Activated T-helper 1 cell treated with anti-CD3 and anti-CD28 coated beads, Interleukin-12 subunit alpha, Interleukin-12 subunit beta, Interleukin-2, Interleukin-4 antibody, amounts not matched to agents 30 ng/mL and 10 ng/mL and 1 ng/mL, durations not matched to agents 14 hours and 24 hours and 36 hours (primary cell): ENCODE measurements at regions of chr2 and their contacts with region 1.

Region 1: DNA sequence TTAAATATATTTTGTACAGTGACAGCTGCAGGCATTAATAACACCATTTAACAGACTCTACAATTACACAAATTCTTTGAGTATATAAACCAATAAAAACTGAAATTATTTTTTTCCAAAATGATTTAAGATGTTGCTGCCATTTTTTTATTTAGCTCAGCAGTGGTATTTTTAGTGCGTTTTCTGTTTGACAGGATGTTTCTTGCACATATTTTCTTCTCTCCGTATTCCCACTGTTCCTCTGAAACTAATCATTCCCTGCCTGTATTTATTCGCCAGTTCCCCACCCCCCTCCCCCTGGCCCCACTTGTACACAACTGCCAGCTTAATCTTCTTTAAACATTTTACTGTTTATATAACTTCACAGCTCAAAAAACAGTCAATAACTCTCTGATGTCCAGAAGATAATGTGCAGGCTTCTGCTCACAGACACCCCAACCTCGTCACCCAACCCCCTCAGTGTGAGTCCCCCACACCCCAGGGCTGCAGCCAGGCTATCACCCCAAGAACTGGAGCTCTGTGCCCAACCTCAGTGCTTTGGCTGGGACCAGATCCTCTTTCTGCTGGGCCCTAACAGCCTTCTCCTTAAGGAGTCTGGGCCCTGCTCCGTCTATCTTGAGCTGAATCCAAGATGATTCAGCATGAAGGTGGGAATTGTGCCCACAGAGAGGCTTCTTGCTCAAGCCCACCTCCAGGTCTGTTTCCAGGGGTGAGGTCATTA is 41.6 kb upstream of the MAP4K4 start:
- DNase-seq: no peak
- H3K4me3 Mint-ChIP-seq: no peak overlapping the region
- H3K27ac Mint-ChIP-seq: no peak overlapping the region
- H3K4me1 Mint-ChIP-seq: peaks cover 18% of the 10 kb centered on the region
- H3K27me3 Mint-ChIP-seq: no peaks in the 10 kb centered on the region

Region 2: GRCh38 chr2:101623031-101623521 is 32.8 kb before region 1 on chr2:
- intact Hi-C with region 1: loop called (anchors 1 kb)
- DNase-seq: no peak
- H3K4me3 Mint-ChIP-seq: peak overlapping the region; percentile 2
- H3K27ac Mint-ChIP-seq: peak overlapping the region; percentile 20
- H3K4me1 Mint-ChIP-seq: peaks cover 34% of the 10 kb centered on the region
- H3K27me3 Mint-ChIP-seq: no peaks in the 10 kb centered on the region

Region 3: GRCh38 chr2:101675512-101675911 is 19.6 kb after region 1 on chr2:
- intact Hi-C with region 1: loop called (anchors 2 kb)
- DNase-seq: no peak
- H3K4me3 Mint-ChIP-seq: no peak overlapping the region
- H3K27ac Mint-ChIP-seq: no peak overlapping the region
- H3K4me1 Mint-ChIP-seq: peaks cover 19% of the 10 kb centered on the region
- H3K27me3 Mint-ChIP-seq: no peaks in the 10 kb centered on the region

Region 4: DNA sequence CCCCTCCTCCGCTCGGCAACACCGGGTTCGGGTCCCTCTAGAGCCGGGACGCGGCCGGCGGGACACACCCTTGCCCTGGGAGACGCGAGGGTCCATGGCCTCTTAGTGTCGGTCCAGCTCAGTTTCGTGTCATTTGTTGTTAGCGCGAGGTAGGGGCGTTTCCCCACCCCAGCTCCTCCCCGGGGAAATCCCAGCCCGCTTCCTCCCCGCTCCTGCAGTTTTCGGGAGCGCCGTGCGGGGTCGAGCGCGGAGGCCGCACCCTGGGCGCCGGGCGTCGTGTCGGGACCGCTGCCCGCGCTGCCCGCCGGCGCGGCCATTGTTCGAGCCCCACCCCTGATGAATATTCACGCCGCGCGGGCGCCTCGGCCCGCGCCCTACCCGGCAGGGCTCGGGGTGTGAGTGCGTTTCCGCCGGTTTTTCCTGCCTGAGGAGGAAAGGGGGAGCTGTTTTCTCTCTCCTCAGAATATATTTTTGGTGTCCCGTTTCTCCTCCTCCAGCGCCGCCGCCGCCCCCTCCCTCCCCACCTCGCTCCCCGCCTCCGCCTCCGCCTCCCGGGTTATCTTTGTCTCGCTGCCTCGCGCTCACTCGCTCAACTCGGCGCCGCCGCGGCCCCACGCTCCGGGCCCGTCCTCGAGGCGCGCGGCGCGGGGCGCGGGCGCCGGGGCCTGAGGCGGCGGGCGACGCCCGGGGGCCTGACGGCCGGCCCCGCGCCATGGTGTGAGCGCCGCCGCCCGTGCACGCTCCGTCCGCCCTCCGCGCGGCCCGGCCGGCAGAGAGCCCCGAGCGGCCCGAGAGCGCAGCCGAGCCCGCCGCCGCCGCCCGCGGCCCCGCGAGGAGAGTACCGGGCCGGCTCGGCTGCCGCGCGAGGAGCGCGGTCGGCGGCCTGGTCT is 41.5 kb after region 1 on chr2 and contains the start of gene MAP4K4:
- intact Hi-C with region 1: loop called (anchors 1 kb)
- DNase-seq: peak; percentile 69
- H3K4me3 Mint-ChIP-seq: peak within 1 kb of the TSS; percentile 88
- H3K27ac Mint-ChIP-seq: peak within 1 kb of the TSS; percentile 88
- H3K4me1 Mint-ChIP-seq: peaks cover 24% of the 10 kb centered on the region
- H3K27me3 Mint-ChIP-seq: no peaks in the 10 kb centered on the region
- total RNA-seq, gene MAP4K4: 54.3 and 54.5 TPM in 2 replicates

Region 5: DNA sequence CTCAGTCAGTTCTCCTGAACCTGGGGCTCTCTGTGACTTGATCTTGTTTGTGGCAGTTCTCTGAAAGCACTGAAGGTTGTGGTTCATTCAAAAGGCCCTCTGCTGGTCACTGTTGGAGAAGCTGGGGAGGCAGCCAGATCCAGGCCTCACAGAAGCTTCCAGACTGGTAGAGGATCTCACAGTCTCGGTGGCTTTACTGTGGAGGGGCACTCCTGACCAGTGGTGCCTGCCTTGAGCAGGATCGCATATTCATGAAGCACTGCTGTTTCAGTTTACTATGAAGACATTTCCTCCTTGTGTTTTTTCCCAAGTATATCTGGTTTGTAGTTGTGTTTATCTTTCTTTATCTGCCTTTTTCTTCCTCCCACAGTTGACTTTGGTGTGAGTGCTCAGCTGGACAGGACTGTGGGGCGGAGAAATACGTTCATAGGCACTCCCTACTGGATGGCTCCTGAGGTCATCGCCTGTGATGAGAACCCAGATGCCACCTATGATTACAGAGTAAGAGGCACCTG is 175.5 kb after region 1 on chr2:
- intact Hi-C with region 1: loop called (anchors 2 kb)
- DNase-seq: peak; percentile 46
- H3K4me3 Mint-ChIP-seq: peak overlapping the region; percentile 32
- H3K27ac Mint-ChIP-seq: peak overlapping the region; percentile 92
- H3K4me1 Mint-ChIP-seq: peaks cover 54% of the 10 kb centered on the region
- H3K27me3 Mint-ChIP-seq: no peaks in the 10 kb centered on the region

Region 6: DNA sequence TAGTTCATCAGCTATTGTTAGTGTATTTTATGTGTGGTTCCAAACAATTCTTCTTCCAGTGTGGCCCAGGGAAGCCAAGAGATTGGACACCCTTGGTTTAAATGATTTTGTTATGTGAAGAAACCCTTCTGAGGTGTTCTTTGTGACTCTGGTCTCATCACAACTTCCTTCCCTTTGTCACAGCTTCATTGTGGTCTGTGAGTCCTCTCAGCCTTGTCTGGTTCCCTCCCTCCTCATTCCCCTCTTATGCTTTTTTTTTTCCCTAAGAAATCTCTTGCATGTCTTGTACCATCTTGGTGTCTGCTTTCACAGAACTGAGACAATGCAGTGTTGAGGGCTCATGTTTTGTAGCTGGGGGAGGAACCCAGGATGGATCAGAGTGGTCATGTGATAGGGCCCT is 1224.9 kb after region 1 on chr2:
- intact Hi-C with region 1: no loop called
- DNase-seq: no peak
- H3K4me3 Mint-ChIP-seq: no peak overlapping the region
- H3K27ac Mint-ChIP-seq: no peak overlapping the region
- H3K4me1 Mint-ChIP-seq: no peaks in the 10 kb centered on the region
- H3K27me3 Mint-ChIP-seq: no peaks in the 10 kb centered on the region